HepG2 (cell line): ENCODE measurements at regions of chr3 and their contacts with region 1.

Region 1: DNA sequence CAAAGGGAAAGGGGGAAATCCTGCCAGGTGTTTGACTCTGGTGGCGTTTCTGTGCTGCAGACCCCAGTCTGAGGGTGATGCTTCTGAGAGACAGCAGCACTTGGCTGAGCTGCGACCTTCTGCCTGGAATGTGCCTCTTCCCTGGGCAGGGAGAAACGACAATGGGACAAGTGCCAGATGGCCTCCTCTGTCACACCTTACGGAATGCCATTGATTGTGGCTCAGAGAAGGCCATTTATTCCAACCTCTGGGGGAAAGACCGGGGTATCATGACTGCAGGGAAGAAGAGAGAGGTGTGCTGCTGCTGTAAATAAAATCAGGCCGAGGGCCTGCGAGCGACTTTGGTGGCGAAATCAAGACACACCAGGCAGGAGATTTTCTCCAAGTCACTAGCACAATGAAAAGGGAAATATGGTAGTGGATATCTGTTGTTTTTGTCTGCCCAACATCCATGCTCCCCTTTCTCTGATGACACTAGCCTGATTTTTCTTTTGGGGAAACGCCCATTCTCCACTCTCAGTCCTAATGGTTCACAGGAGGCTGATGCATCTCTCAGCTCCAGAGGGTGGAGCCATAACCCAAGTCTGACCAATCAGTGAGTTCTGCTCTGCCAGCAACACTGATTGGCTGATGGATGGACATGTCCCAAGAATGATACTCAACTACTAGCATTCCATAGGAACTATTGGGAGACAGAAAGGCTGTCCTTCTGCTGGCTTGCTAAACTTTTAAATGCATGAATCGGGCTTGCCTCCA is 336.1 kb downstream of the FOXP1 start:
- DNase-seq: peak; percentile 68
- ATAC-seq: peak; percentile 46
- H3K4me3 ChIP-seq: 0 out of 6 replicates have a peak overlapping the region, but pooled peaks of 1 of the 3 experiments have one; percentile 8
- H3K27ac ChIP-seq: peak overlapping the region; percentile 37
- H3K4me1 ChIP-seq: peaks cover 90% of the 10 kb centered on the region
- H3K27me3 ChIP-seq: no peaks in the 10 kb centered on the region
- CTCF ChIP-seq: peak; percentile 38; the same call in 1 of the 2 replicates
- EP300 ChIP-seq: no peak
- POLR2A ChIP-seq: no peak
- RAD21 ChIP-seq: no peak

Region 2: DNA sequence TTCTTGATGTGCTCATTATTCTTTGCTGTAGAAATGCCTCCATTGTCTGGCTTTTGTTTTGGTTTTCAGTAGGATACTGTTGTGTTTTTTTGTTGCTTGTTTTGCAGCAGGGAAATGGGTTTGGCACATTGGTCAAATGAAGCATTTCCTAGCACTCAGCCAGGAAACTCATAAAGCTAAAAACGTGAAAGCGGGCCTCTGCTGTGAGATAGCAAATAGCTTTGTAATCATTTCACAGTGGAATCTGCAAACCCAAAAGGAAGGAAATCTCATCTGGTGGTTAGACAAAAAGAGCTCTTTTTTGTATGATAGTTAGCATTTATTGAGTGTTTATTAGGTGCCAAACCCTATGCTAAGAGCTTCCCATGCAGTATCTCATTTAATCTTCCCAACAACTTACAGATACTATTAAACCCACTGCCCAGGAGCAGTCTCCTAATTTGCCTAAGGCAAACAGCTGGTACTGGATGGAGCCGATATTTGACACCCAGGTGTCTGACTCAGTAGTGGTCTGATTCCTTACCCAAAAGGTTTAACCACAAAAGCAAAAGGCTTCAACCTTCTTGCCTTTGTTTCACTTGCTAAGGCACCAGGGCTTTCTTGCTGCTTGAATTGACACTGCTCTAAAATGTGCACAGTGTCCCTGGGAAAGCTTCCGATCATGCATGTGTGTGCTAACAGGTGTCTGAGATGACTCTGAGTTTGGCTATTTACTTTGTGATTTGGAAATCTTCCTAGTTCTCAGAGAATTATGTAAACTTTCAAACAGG is 407.1 kb before region 1 on chr3:
- CTCF ChIA-PET with region 1: no interaction called
- POLR2A ChIA-PET with region 1: no interaction called
- in situ Hi-C with region 1: no loop called
- intact Hi-C with region 1: no loop called
- DNase-seq: no peak
- ATAC-seq: no peak
- H3K4me3 ChIP-seq: no peak overlapping the region
- H3K27ac ChIP-seq: no peak overlapping the region
- H3K4me1 ChIP-seq: no peaks in the 10 kb centered on the region
- H3K27me3 ChIP-seq: peaks cover 0 to 14% of the 10 kb centered on the region in 2 experiments; a peak in 2 of 5 replicates
- CTCF ChIP-seq: no peak
- EP300 ChIP-seq: no peak
- POLR2A ChIP-seq: no peak
- RAD21 ChIP-seq: no peak

Region 3: GRCh38 chr3:71064288-71064955 is 183.0 kb before region 1 on chr3:
- CTCF ChIA-PET with region 1: no interaction called
- POLR2A ChIA-PET with region 1: interaction called, 10 read pairs
- in situ Hi-C with region 1: no loop called
- intact Hi-C with region 1: no loop called
- DNase-seq: peak; percentile 63
- ATAC-seq: peak; percentile 80
- H3K4me3 ChIP-seq: peak overlapping the region; percentile 70 to 83 (median 82)
- H3K27ac ChIP-seq: peak overlapping the region; percentile 71
- H3K4me1 ChIP-seq: peaks cover 75% of the 10 kb centered on the region
- H3K27me3 ChIP-seq: no peaks in the 10 kb centered on the region; a peak in 1 of 5 replicates
- CTCF ChIP-seq: no peak
- EP300 ChIP-seq: no peak; a peak in 1 of 4 replicates
- POLR2A ChIP-seq: peak in 1 of 2 experiments; percentile 4; a peak in 1 of 4 replicates
- RAD21 ChIP-seq: no peak

Region 4: DNA sequence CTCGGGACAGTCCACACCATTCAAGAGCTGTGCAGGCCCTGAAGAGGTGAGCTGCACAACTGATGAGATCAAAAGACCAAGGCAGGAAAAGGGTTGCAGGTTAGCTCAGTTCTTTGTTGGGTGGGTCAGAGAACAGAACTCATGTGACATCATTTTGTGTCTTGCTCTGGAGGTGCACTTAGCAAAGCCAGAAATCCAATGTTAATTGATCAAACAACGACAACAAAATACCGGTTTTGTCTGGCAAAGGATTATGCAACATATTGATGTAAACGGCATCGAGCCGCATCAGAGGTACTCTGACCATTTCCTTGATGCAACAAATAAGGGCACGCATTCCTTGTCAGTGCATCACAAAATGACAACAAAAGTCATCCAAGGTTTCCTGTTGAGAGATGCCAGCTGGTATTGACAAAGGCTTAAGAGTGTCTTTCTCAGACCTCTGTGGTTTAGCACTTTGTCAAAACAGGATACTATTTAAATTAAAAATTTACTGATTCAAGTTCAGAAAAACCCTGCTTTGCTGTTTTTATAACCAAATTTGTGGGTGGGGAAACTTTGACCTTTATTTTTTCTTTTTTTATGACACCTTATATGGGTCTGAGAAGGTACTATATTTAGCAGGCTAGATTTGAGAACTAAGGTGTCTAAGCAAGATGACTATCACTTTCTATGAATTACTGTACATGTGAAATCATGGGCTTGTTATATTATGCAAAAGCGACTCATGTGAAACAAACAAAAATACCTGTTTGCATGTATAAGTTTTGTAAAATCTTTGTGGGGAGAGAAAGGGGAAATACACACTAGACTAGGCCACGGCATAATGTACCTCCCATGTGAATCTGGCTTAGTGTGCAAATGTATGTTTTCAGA is 160.0 kb before region 1 on chr3:
- CTCF ChIA-PET with region 1: no interaction called
- POLR2A ChIA-PET with region 1: interaction called, 5 read pairs
- in situ Hi-C with region 1: no loop called
- intact Hi-C with region 1: loop called (anchors 5 kb)
- DNase-seq: peak; percentile 83
- ATAC-seq: peak; percentile 62
- H3K4me3 ChIP-seq: peak overlapping the region in 2 of 3 experiments; percentile 10 to 11; a peak in 1 of 6 replicates
- H3K27ac ChIP-seq: peak overlapping the region; percentile 65
- H3K4me1 ChIP-seq: peaks cover 71% of the 10 kb centered on the region
- H3K27me3 ChIP-seq: no peaks in the 10 kb centered on the region
- CTCF ChIP-seq: no peak
- EP300 ChIP-seq: peak in 1 of 2 experiments; percentile 80; a peak in 2 of 4 replicates
- POLR2A ChIP-seq: no peak
- RAD21 ChIP-seq: no peak

Region 5: GRCh38 chr3:71142440-71143161 is 104.8 kb before region 1 on chr3:
- CTCF ChIA-PET with region 1: no interaction called
- POLR2A ChIA-PET with region 1: interaction called, 12 read pairs
- in situ Hi-C with region 1: no loop called
- intact Hi-C with region 1: no loop called
- DNase-seq: no peak
- ATAC-seq: peak; percentile 29; the same call in 2 of the 3 replicates
- H3K4me3 ChIP-seq: no peak overlapping the region
- H3K27ac ChIP-seq: peak overlapping the region; percentile 76
- H3K4me1 ChIP-seq: peaks cover 31% of the 10 kb centered on the region
- H3K27me3 ChIP-seq: no peaks in the 10 kb centered on the region
- CTCF ChIP-seq: no peak
- EP300 ChIP-seq: no peak
- POLR2A ChIP-seq: no peak
- RAD21 ChIP-seq: no peak

Region 6: GRCh38 chr3:71149959-71150954 is 97.1 kb before region 1 on chr3:
- CTCF ChIA-PET with region 1: no interaction called
- POLR2A ChIA-PET with region 1: interaction called, 3 read pairs
- in situ Hi-C with region 1: no loop called
- intact Hi-C with region 1: loop called (anchors 5 kb)
- DNase-seq: no peak
- ATAC-seq: no peak
- H3K4me3 ChIP-seq: no peak overlapping the region
- H3K27ac ChIP-seq: no peak overlapping the region
- H3K4me1 ChIP-seq: peaks cover 50% of the 10 kb centered on the region
- H3K27me3 ChIP-seq: no peaks in the 10 kb centered on the region
- CTCF ChIP-seq: no peak
- EP300 ChIP-seq: no peak
- POLR2A ChIP-seq: no peak
- RAD21 ChIP-seq: no peak

Region 7: DNA sequence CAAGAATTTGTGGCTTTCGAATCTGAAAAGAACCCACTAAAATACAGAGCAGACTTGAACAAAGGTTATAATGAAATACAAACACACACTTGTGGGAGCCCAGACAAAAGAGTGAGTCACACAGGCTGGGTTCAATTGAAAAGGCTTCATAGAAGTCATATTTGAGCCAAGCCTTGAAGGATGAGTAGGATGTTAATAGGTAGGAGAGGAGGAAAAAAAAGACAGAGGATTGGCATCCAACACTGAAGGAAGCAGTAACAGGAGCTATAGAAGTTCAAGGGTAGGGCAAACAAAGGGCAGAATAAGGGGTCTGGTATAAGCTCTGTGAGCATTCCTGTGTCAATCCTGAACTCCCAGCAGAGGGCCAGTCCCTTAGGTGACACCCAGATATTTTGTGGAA is 10.7 kb after region 1 on chr3:
- CTCF ChIA-PET with region 1: no interaction called
- POLR2A ChIA-PET with region 1: interaction called, 67 read pairs
- in situ Hi-C with region 1: no loop called
- intact Hi-C with region 1: no loop called
- DNase-seq: peak; percentile 70
- ATAC-seq: peak; percentile 68
- H3K4me3 ChIP-seq: no peak overlapping the region
- H3K27ac ChIP-seq: peak overlapping the region; percentile 59
- H3K4me1 ChIP-seq: peaks cover 83% of the 10 kb centered on the region
- H3K27me3 ChIP-seq: no peaks in the 10 kb centered on the region
- CTCF ChIP-seq: no peak
- EP300 ChIP-seq: no peak
- POLR2A ChIP-seq: no peak
- RAD21 ChIP-seq: no peak

Region 8: GRCh38 chr3:71305231-71306206 is 58.1 kb after region 1 on chr3:
- CTCF ChIA-PET with region 1: no interaction called
- POLR2A ChIA-PET with region 1: interaction called, 10 read pairs
- in situ Hi-C with region 1: no loop called
- intact Hi-C with region 1: no loop called
- DNase-seq: peak; percentile 70
- ATAC-seq: peak; percentile 87
- H3K4me3 ChIP-seq: peak overlapping the region; percentile 66 to 75 (median 74)
- H3K27ac ChIP-seq: peak overlapping the region; percentile 79
- H3K4me1 ChIP-seq: peaks cover 66% of the 10 kb centered on the region
- H3K27me3 ChIP-seq: no peaks in the 10 kb centered on the region
- CTCF ChIP-seq: no peak
- EP300 ChIP-seq: 0 out of 4 replicates have a peak, but pooled peaks of 1 of the 2 experiments have one; percentile 3
- POLR2A ChIP-seq: peak; percentile 21 to 52; a peak in 2 of 4 replicates
- RAD21 ChIP-seq: no peak

Region 9: GRCh38 chr3:71444028-71444860 is 196.8 kb after region 1 on chr3:
- CTCF ChIA-PET with region 1: no interaction called
- POLR2A ChIA-PET with region 1: no interaction called
- in situ Hi-C with region 1: no loop called
- intact Hi-C with region 1: no loop called
- DNase-seq: no peak
- ATAC-seq: no peak
- H3K4me3 ChIP-seq: no peak overlapping the region
- H3K27ac ChIP-seq: no peak overlapping the region
- H3K4me1 ChIP-seq: no peaks in the 10 kb centered on the region
- H3K27me3 ChIP-seq: no peaks in the 10 kb centered on the region
- CTCF ChIP-seq: no peak
- EP300 ChIP-seq: no peak
- POLR2A ChIP-seq: no peak
- RAD21 ChIP-seq: no peak